A673 (cell line): ENCODE measurements at regions of chr13 and their contacts with region 1.

Region 1: GRCh38 chr13:109427148-109427547 is 359.2 kb downstream of the IRS2 start:
- DNase-seq: peak; percentile 61
- H3K4me3 ChIP-seq: no peak overlapping the region
- H3K27ac ChIP-seq: peak overlapping the region; percentile 99
- H3K4me1 ChIP-seq: peaks cover 27% of the 10 kb centered on the region
- H3K27me3 ChIP-seq: no peaks in the 10 kb centered on the region
- CTCF ChIP-seq: no peak

Region 2: GRCh38 chr13:108269601-108270328 is 1157.4 kb before region 1 on chr13 and contains the start of gene TNFSF13B:
- CTCF ChIA-PET with region 1: no interaction called
- POLR2A ChIA-PET with region 1: no interaction called
- intact Hi-C with region 1: loop called (anchors 2 kb)
- DNase-seq: peak; percentile 62
- H3K4me3 ChIP-seq: peak within 1 kb of the TSS; percentile 41
- H3K27ac ChIP-seq: peak within 1 kb of the TSS; percentile 84
- H3K4me1 ChIP-seq: peaks cover 59% of the 10 kb centered on the region
- H3K27me3 ChIP-seq: no peaks in the 10 kb centered on the region
- CTCF ChIP-seq: peak; percentile 34; the same call in 1 of the 2 replicates
- total RNA-seq, gene TNFSF13B: 9.2 and 11.2 TPM in 2 replicates

Region 3: GRCh38 chr13:108915634-108916512 is 511.3 kb before region 1 on chr13:
- CTCF ChIA-PET with region 1: interaction called, 3 read pairs
- POLR2A ChIA-PET with region 1: no interaction called
- intact Hi-C with region 1: loop called (anchors 5 kb)
- DNase-seq: peak; percentile 62
- H3K4me3 ChIP-seq: peak overlapping the region; percentile 4
- H3K27ac ChIP-seq: peak overlapping the region; percentile 61
- H3K4me1 ChIP-seq: peaks cover 36% of the 10 kb centered on the region
- H3K27me3 ChIP-seq: no peaks in the 10 kb centered on the region
- CTCF ChIP-seq: no peak

Region 4: DNA sequence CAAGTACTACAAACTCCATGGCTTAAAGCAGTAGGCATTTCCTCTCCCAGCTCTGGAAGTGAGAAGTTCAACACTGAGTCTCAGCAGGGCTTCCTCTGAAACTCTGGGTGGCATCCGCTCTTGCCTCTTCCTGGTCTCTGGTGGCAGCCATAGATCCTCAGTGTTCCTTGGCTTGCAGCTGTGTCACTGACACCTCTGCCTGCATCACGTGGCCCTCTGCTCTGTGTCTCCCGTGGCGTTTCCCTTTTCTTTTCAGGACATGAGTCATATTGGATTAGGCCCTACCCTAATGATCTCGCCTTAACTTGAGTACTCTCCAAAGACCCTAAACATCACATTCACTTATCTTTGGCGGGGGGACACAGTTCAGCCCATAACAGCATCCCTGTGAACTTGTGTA is 331.0 kb before region 1 on chr13:
- CTCF ChIA-PET with region 1: no interaction called
- POLR2A ChIA-PET with region 1: no interaction called
- intact Hi-C with region 1: loop called (anchors 2 kb)
- DNase-seq: peak; percentile 96
- H3K4me3 ChIP-seq: no peak overlapping the region
- H3K27ac ChIP-seq: peak overlapping the region; percentile 53
- H3K4me1 ChIP-seq: peaks cover 21% of the 10 kb centered on the region
- H3K27me3 ChIP-seq: no peaks in the 10 kb centered on the region
- CTCF ChIP-seq: no peak

Region 5: GRCh38 chr13:109154966-109155761 is 272.0 kb before region 1 on chr13:
- CTCF ChIA-PET with region 1: no interaction called
- POLR2A ChIA-PET with region 1: no interaction called
- intact Hi-C with region 1: loop called (anchors 1 kb)
- DNase-seq: no peak
- H3K4me3 ChIP-seq: no peak overlapping the region
- H3K27ac ChIP-seq: no peak overlapping the region
- H3K4me1 ChIP-seq: peaks cover 59% of the 10 kb centered on the region
- H3K27me3 ChIP-seq: no peaks in the 10 kb centered on the region
- CTCF ChIP-seq: no peak

Region 6: DNA sequence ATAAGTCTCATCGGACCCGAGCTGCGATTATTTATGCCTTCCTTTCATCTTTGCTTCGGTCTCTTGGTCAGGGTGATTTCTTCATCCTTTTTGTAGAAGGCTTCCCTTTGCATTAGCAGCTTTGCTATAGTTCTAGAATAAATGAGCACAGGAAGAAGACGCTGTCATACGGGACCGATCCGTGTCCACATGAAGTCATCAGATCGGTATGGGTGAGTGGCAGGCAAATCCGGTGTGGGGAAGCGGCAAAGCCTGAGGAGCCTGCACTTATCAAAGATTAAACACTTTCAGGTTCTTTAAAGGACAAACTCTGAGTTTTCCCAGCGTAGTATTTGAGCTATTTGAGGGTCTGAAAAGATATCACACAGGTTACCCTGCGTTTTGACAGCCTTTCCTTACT is 239.9 kb after region 1 on chr13:
- CTCF ChIA-PET with region 1: no interaction called
- POLR2A ChIA-PET with region 1: interaction called, 14 read pairs
- intact Hi-C with region 1: loop called (anchors 1 kb)
- DNase-seq: peak; percentile 85
- H3K4me3 ChIP-seq: peak overlapping the region; percentile 22
- H3K27ac ChIP-seq: peak overlapping the region; percentile 97
- H3K4me1 ChIP-seq: peaks cover 53% of the 10 kb centered on the region
- H3K27me3 ChIP-seq: no peaks in the 10 kb centered on the region
- CTCF ChIP-seq: no peak

Region 7: GRCh38 chr13:109786457-109787134 is 359.4 kb after region 1 on chr13 and contains the start of gene IRS2:
- CTCF ChIA-PET with region 1: no interaction called
- POLR2A ChIA-PET with region 1: no interaction called
- intact Hi-C with region 1: loop called (anchors 1 kb)
- DNase-seq: peak; percentile 97
- H3K4me3 ChIP-seq: peak within 1 kb of the TSS; percentile 84
- H3K27ac ChIP-seq: peak within 1 kb of the TSS; percentile 94
- H3K4me1 ChIP-seq: peaks cover 32% of the 10 kb centered on the region
- H3K27me3 ChIP-seq: no peaks in the 10 kb centered on the region
- CTCF ChIP-seq: no peak
- total RNA-seq, gene IRS2: 135 TPM in 2 replicates

Region 8: DNA sequence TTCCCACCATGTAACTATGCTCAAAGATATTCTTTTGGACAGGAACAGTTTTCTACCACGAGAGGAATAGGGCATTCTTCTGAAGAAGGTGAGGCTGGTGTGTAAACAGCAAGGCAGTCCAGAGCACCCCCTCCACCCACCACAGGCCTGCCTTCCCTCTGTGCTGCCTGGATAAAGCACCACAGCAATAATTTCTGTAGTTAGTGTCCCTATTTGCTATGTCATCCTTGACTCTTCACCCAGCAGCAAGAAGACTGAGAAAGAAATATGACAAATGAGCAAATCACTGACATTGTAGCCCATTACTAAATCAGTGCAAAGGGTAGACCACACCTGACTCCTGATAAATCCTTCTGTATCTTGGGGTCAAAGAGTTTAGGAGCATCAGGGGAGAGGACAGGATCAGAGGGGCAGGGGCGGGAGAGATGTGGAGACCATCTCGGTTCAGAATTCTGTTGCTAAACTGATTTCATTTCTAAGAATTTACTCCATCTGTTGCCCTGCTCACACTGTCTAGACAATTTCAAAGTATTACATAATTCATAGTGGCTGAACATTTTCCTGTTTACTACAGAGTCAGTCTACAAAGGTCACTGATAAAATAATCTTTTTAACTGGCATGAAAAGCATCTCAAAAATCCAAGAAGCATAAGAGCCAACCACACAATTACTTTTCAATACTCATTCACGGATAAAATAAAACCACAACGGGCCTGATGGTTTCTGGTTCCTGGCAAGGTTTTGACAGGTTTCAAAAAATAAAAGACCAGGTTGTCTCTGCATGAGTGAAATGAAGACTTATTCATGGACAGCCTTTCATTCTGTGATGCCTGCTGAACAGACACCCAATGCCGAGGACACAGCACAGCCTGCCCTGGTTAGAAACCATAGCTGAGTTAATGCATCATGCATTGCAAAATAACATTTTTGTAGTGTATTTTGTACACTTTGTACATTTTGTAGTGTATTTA is 447.6 kb after region 1 on chr13:
- CTCF ChIA-PET with region 1: no interaction called
- POLR2A ChIA-PET with region 1: no interaction called
- intact Hi-C with region 1: no loop called
- DNase-seq: no peak
- H3K4me3 ChIP-seq: no peak overlapping the region
- H3K27ac ChIP-seq: no peak overlapping the region
- H3K4me1 ChIP-seq: no peaks in the 10 kb centered on the region
- H3K27me3 ChIP-seq: no peaks in the 10 kb centered on the region
- CTCF ChIP-seq: no peak

Region 9: GRCh38 chr13:109919715-109920375 is 492.7 kb after region 1 on chr13:
- CTCF ChIA-PET with region 1: no interaction called
- POLR2A ChIA-PET with region 1: no interaction called
- intact Hi-C with region 1: no loop called
- DNase-seq: no peak
- H3K4me3 ChIP-seq: no peak overlapping the region
- H3K27ac ChIP-seq: no peak overlapping the region
- H3K4me1 ChIP-seq: no peaks in the 10 kb centered on the region
- H3K27me3 ChIP-seq: no peaks in the 10 kb centered on the region
- CTCF ChIP-seq: no peak